GM12878 (cell line): ENCODE measurements at regions of chr10 and their contacts with region 1.

Region 1: DNA sequence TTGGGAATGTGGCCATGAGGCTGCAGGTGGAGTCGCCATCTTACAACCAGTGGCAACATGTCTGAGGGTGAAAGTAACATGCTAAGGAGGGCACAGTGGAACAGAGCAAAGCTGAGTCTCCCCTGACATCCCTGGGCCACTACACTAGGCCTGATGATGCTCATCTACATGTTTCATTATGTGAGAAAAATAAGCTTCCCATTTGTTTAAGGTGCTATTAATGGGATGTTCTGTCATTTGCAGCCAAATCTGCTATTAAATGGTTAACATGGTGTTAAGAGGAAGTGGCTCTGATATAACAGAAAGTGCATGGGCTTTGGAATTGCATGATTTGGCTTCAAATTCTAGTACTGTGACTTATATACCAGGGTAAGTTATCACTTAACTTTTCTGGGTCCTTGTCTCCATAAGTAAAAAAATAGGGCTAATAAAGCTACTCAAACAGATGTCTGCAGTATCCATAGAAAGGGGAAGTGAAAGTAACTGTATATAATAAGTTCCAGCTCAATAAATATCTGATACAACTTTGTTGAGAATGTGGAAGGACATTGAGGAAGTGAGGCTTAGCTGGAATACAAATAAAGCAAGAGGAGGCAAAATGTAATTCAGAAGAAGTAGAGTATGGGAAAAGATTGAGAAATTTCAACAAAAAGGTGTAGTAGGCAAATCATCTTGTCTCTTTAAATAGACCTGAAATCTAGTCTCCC is 158.9 kb downstream of the RTKN2 start:
- DNase-seq: peak; percentile 51
- ATAC-seq: peak; percentile 88
- H3K4me3 ChIP-seq: no peak overlapping the region
- H3K27ac ChIP-seq: peak overlapping the region; percentile 69
- H3K4me1 ChIP-seq: peaks cover 36% of the 10 kb centered on the region
- H3K27me3 ChIP-seq: no peaks in the 10 kb centered on the region
- CTCF ChIP-seq: no peak
- EP300 ChIP-seq: peak; percentile 55 to 87
- POLR2A ChIP-seq: no peak
- RAD21 ChIP-seq: no peak

Region 2: DNA sequence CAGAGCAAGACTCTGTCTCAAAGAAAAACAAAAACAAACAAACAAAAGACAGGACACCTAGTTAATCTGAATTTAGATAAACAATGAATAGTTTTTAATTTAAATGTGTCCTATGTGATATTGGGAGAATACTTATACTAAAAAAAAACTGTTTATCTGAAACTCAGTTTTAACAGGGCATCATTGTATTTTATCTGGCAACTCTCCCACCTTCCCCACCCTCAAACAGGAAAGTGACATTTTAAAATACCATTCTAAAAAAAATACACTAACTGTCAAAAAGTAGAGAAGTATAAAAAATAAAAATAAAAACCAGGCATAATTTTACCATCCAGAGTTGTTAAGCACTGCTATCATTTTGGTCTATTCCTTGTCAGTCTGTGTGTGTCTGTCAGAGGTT is 39.9 kb after region 1 on chr10:
- CTCF ChIA-PET with region 1: no interaction called
- POLR2A ChIA-PET with region 1: no interaction called
- RAD21 ChIA-PET with region 1: no interaction called
- SMC1A ChIA-PET with region 1: no interaction called
- in situ Hi-C with region 1: no loop called
- intact Hi-C with region 1: no loop called
- DNase-seq: no peak
- ATAC-seq: no peak
- H3K4me3 ChIP-seq: no peak overlapping the region
- H3K27ac ChIP-seq: no peak overlapping the region
- H3K4me1 ChIP-seq: no peaks in the 10 kb centered on the region
- H3K27me3 ChIP-seq: no peaks in the 10 kb centered on the region
- CTCF ChIP-seq: no peak
- EP300 ChIP-seq: no peak
- POLR2A ChIP-seq: no peak
- RAD21 ChIP-seq: no peak

Region 3: GRCh38 chr10:62166331-62167131 is 56.8 kb after region 1 on chr10:
- CTCF ChIA-PET with region 1: no interaction called
- POLR2A ChIA-PET with region 1: no interaction called
- RAD21 ChIA-PET with region 1: no interaction called
- SMC1A ChIA-PET with region 1: no interaction called
- in situ Hi-C with region 1: no loop called
- intact Hi-C with region 1: loop called (anchors 5 kb)
- DNase-seq: peak; percentile 54
- ATAC-seq: peak; percentile 100
- H3K4me3 ChIP-seq: no peak overlapping the region
- H3K27ac ChIP-seq: peak overlapping the region; percentile 41
- H3K4me1 ChIP-seq: peaks cover 14% of the 10 kb centered on the region; the same call in 1 of the 2 replicates
- H3K27me3 ChIP-seq: no peaks in the 10 kb centered on the region
- CTCF ChIP-seq: no peak
- EP300 ChIP-seq: peak in 1 of 2 experiments; percentile 73; a peak in 2 of 4 replicates
- POLR2A ChIP-seq: no peak
- RAD21 ChIP-seq: no peak